ENCODE measurements at regions of chr5 and their contacts with region 1.

Region 1: DNA sequence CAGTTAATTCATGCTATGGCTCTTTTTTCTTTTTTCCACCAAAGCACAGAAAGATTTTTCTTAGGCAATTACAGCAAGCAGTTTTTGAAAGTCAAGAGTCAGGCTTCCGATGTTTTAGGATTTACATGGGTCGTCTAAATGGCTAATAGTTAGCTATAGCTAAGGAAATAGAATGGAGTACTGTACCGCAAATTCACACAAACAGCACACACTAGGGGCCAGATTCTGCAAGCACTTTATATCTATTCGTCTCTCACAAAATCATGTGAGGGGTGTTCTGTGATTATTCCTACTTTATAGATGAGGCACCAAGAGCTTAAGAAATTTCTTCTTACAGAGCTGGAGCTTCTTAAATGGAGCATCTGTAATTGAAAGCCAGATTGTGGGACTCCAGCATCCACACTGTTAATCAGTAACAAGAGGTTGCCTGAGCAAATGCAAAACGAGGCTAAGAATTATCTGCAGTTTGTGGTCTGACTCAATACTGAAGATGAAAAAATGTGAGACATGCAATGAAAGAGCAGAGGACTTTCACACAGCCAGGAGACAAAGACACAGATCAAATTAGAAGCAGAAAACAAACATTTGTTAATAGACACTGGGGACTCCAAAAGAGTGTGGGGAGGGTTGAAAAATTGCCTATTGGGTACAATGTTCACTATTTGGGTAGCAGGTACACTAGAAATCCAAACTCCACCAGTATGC is 62.7 kb upstream of the CTXN3 start:
- DNase-seq: no peak
- ATAC-seq: peak; percentile 25
- H3K4me3 Mint-ChIP-seq: no peak overlapping the region
- H3K27ac Mint-ChIP-seq: peak overlapping the region; percentile 53
- H3K4me1 Mint-ChIP-seq: peaks cover 50% of the 10 kb centered on the region
- H3K27me3 Mint-ChIP-seq: peaks cover 6% of the 10 kb centered on the region

Region 2: GRCh38 chr5:127556609-127557334 is 29.4 kb before region 1 on chr5:
- CTCF ChIA-PET with region 1: no interaction called
- DNase-seq: no peak
- ATAC-seq: no peak
- H3K4me3 Mint-ChIP-seq: no peak overlapping the region
- H3K27ac Mint-ChIP-seq: no peak overlapping the region
- H3K4me1 Mint-ChIP-seq: no peaks in the 10 kb centered on the region
- H3K27me3 Mint-ChIP-seq: peaks cover under 1% of the 10 kb centered on the region

Region 3: GRCh38 chr5:127572930-127573329 is 13.3 kb before region 1 on chr5:
- CTCF ChIA-PET with region 1: interaction called, 34 read pairs
- DNase-seq: no peak
- ATAC-seq: peak; percentile 61
- H3K4me3 Mint-ChIP-seq: no peak overlapping the region
- H3K27ac Mint-ChIP-seq: no peak overlapping the region
- H3K4me1 Mint-ChIP-seq: peaks cover 45% of the 10 kb centered on the region
- H3K27me3 Mint-ChIP-seq: peaks cover 2% of the 10 kb centered on the region

Measured in activated CD8-positive, alpha-beta memory T cell treated with anti-CD3 and anti-CD28 coated beads, Interleukin-2, amount 10 ng/mL, durations not matched to agents 7 days and 5 days (primary cell).